CD4-positive, alpha-beta T cell (primary cell): ENCODE measurements at regions of chrX and their contacts with region 1.

Region 1: DNA sequence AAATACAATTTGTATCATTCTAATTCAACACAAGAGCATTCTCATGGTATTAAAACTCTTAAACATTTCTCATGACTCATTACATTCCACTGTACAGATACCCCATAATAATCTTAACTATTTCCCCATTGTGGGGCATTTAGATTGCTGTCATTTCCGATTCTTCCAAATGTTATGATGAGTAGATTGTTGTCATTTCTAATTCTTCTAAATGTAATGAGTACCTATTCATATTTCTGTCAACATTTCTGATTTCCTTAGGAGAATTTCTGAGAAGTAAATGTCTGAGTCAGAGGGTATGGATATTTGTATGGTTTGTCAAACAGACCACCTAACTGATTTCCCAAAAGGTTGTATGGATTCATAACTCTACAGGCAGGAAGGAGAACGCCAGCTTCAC is 8.3 kb downstream of the S100G start:
- DNase-seq: no peak
- ATAC-seq: no peak
- H3K4me3 ChIP-seq: no peak overlapping the region
- H3K4me3 Mint-ChIP-seq: no peak overlapping the region
- H3K27ac ChIP-seq: no peak overlapping the region
- H3K27ac Mint-ChIP-seq: no peak overlapping the region
- H3K4me1 ChIP-seq: no peaks in the 10 kb centered on the region
- H3K4me1 Mint-ChIP-seq: no peaks in the 10 kb centered on the region
- H3K27me3 ChIP-seq: no peaks in the 10 kb centered on the region
- H3K27me3 Mint-ChIP-seq: no peaks in the 10 kb centered on the region
- CTCF ChIP-seq: no peak

Region 2: GRCh38 chrX:16123222-16123786 is 535.0 kb before region 1 on chrX and contains the start of gene GRPR:
- CTCF ChIA-PET with region 1: no interaction called
- POLR2A ChIA-PET with region 1: no interaction called
- intact Hi-C with region 1: loop called in 1 of 2 experiments (anchors 5 kb)
- DNase-seq: peak; percentile 25 to 74 (median 45)
- ATAC-seq: peak; percentile 88
- H3K4me3 ChIP-seq: no peak within 1 kb of the TSS
- H3K4me3 Mint-ChIP-seq: no peak within 1 kb of the TSS
- H3K27ac ChIP-seq: no peak within 1 kb of the TSS
- H3K27ac Mint-ChIP-seq: no peak within 1 kb of the TSS
- H3K4me1 ChIP-seq: no peaks in the 10 kb centered on the region
- H3K4me1 Mint-ChIP-seq: peaks cover 11% of the 10 kb centered on the region
- H3K27me3 ChIP-seq: no peaks in the 10 kb centered on the region
- H3K27me3 Mint-ChIP-seq: peaks cover 17% of the 10 kb centered on the region
- CTCF ChIP-seq: peak; percentile 54
- total RNA-seq, gene GRPR: 0.20 to 0.22 TPM

Region 3: GRCh38 chrX:16544969-16545368 is 113.3 kb before region 1 on chrX:
- CTCF ChIA-PET with region 1: no interaction called
- POLR2A ChIA-PET with region 1: no interaction called
- intact Hi-C with region 1: no loop called
- DNase-seq: no peak
- ATAC-seq: no peak
- H3K4me3 ChIP-seq: no peak overlapping the region
- H3K4me3 Mint-ChIP-seq: no peak overlapping the region
- H3K27ac ChIP-seq: no peak overlapping the region
- H3K27ac Mint-ChIP-seq: no peak overlapping the region
- H3K4me1 ChIP-seq: no peaks in the 10 kb centered on the region
- H3K4me1 Mint-ChIP-seq: no peaks in the 10 kb centered on the region
- H3K27me3 ChIP-seq: no peaks in the 10 kb centered on the region
- H3K27me3 Mint-ChIP-seq: no peaks in the 10 kb centered on the region
- CTCF ChIP-seq: no peak

Region 4: DNA sequence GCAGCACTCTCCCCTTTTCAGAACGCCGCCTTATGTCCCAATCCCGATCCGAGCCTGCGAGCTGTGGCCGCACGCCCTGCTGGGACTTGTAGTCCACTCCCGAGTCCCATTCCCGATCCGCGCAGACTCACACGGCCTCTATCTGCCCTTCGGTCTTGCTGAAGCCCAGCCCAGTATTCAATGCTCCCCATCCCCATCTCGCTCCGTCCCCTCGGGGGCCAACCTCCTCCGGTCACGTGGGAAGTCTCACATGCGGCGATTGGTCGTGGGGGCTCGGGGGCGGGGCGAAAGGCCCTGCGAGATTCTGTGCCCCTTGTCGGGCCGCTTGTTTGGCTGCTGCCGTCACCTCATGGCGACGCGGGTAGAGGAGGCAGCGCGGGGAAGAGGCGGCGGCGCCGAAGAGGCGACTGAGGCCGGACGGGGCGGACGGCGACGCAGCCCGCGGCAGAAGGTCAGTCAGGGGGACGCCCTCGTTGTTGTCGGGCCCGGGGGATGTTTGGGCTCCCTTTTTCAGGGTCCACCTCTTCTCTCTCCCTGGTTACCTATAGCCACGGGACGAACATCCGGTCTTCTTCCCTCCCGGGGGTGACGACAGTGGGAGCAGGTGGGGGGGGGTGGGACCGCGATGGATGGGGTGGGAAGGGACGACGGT is 128.0 kb after region 1 on chrX and contains the start of gene TXLNG:
- CTCF ChIA-PET with region 1: no interaction called
- POLR2A ChIA-PET with region 1: no interaction called
- intact Hi-C with region 1: no loop called
- DNase-seq: peak; percentile 85 to 98 (median 94)
- ATAC-seq: peak; percentile 94
- H3K4me3 ChIP-seq: peak within 1 kb of the TSS; percentile 76
- H3K4me3 Mint-ChIP-seq: peak within 1 kb of the TSS; percentile 97
- H3K27ac ChIP-seq: peak within 1 kb of the TSS; percentile 84 to 87
- H3K27ac Mint-ChIP-seq: peak within 1 kb of the TSS; percentile 84
- H3K4me1 ChIP-seq: peaks cover 12% of the 10 kb centered on the region
- H3K4me1 Mint-ChIP-seq: peaks cover 29% of the 10 kb centered on the region
- H3K27me3 ChIP-seq: no peaks in the 10 kb centered on the region
- H3K27me3 Mint-ChIP-seq: no peaks in the 10 kb centered on the region
- CTCF ChIP-seq: no peak
- total RNA-seq, gene TXLNG: 17.2 to 17.5 TPM

Region 5: GRCh38 chrX:16797358-16797757 is 139.1 kb after region 1 on chrX:
- CTCF ChIA-PET with region 1: no interaction called
- POLR2A ChIA-PET with region 1: no interaction called
- intact Hi-C with region 1: no loop called
- DNase-seq: no peak
- ATAC-seq: no peak
- H3K4me3 ChIP-seq: no peak overlapping the region
- H3K4me3 Mint-ChIP-seq: no peak overlapping the region
- H3K27ac ChIP-seq: no peak overlapping the region
- H3K27ac Mint-ChIP-seq: no peak overlapping the region
- H3K4me1 ChIP-seq: no peaks in the 10 kb centered on the region
- H3K4me1 Mint-ChIP-seq: peaks cover 14% of the 10 kb centered on the region
- H3K27me3 ChIP-seq: no peaks in the 10 kb centered on the region
- H3K27me3 Mint-ChIP-seq: no peaks in the 10 kb centered on the region
- CTCF ChIP-seq: no peak

Region 6: GRCh38 chrX:17361620-17362019 is 703.3 kb after region 1 on chrX:
- CTCF ChIA-PET with region 1: no interaction called
- POLR2A ChIA-PET with region 1: no interaction called
- intact Hi-C with region 1: no loop called
- DNase-seq: no peak
- ATAC-seq: no peak
- H3K4me3 ChIP-seq: no peak overlapping the region
- H3K4me3 Mint-ChIP-seq: no peak overlapping the region
- H3K27ac ChIP-seq: no peak overlapping the region
- H3K27ac Mint-ChIP-seq: no peak overlapping the region
- H3K4me1 ChIP-seq: no peaks in the 10 kb centered on the region
- H3K4me1 Mint-ChIP-seq: no peaks in the 10 kb centered on the region
- H3K27me3 ChIP-seq: no peaks in the 10 kb centered on the region
- H3K27me3 Mint-ChIP-seq: peaks cover 4% of the 10 kb centered on the region
- CTCF ChIP-seq: no peak